ENCODE measurements at regions of chr17 and their contacts with region 1.

Region 1: DNA sequence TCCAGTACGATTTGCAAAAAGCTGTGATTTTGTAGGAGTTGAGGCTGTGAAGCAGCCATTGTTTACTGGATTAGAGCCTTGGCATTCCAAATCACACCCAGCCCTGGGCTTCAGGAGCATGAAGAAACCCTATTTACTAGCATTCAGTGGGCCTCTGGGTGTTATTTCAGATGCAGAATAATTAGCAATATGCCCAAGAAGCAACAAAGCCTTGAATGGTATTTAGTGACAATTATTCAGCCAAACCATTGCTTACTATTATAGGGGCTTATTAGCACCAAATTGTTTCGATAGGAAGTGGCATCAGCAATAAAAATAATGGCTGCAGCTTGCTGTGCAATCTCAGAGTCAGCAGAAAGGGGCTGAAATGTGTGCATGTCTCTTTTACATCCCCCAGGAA is 166.6 kb upstream of the SHISA6 start:
- DNase-seq: no peak
- H3K4me3 ChIP-seq: no peak overlapping the region
- H3K27ac ChIP-seq: no peak overlapping the region
- H3K4me1 ChIP-seq: no peaks in the 10 kb centered on the region
- H3K27me3 ChIP-seq: no peaks in the 10 kb centered on the region
- CTCF ChIP-seq: no peak
- EP300 ChIP-seq: no peak
- POLR2A ChIP-seq: no peak

Region 2: DNA sequence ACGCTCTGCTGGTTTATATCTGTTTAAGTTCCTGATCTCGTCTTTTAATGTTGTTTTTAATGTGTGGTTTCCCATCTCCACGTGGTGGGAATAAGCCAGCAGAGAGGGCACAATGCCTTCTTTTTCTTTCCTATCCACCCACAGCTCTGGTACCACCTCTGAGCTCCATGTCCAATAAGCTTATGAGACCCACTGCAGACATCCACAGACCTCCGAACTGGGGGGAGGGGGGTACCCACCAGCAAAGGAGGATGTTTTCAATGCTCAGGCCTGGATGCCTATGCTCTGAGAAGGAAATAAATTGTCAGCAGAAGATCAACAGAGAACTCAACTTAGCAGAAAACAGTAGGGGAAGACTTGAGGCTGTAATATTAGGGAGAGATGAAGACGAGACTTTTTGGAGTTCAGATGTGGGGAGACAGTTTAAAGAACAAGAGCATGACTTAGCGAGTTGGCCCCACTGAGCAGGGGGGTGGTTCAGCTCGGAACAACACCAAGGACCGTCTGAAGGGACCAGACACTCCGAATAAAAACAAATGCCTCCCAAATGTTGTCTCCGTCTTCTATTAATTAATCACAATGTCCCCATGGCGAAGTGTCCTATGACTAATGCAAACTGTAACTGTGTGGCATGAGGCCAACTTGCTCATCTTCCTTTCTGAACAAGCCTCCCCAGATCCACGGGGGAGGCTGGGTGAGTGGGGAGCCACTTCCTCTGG is 938.8 kb before region 1 on chr17:
- in situ Hi-C with region 1: no loop called
- intact Hi-C with region 1: no loop called
- DNase-seq: peak; percentile 49
- H3K4me3 ChIP-seq: no peak overlapping the region
- H3K27ac ChIP-seq: peak overlapping the region; percentile 36 to 65 (median 49)
- H3K4me1 ChIP-seq: peaks cover 0 to 15% (median 0%) of the 10 kb centered on the region in 4 donors
- H3K27me3 ChIP-seq: no peaks in the 10 kb centered on the region
- CTCF ChIP-seq: no peak
- EP300 ChIP-seq: no peak
- POLR2A ChIP-seq: no peak

Region 3: DNA sequence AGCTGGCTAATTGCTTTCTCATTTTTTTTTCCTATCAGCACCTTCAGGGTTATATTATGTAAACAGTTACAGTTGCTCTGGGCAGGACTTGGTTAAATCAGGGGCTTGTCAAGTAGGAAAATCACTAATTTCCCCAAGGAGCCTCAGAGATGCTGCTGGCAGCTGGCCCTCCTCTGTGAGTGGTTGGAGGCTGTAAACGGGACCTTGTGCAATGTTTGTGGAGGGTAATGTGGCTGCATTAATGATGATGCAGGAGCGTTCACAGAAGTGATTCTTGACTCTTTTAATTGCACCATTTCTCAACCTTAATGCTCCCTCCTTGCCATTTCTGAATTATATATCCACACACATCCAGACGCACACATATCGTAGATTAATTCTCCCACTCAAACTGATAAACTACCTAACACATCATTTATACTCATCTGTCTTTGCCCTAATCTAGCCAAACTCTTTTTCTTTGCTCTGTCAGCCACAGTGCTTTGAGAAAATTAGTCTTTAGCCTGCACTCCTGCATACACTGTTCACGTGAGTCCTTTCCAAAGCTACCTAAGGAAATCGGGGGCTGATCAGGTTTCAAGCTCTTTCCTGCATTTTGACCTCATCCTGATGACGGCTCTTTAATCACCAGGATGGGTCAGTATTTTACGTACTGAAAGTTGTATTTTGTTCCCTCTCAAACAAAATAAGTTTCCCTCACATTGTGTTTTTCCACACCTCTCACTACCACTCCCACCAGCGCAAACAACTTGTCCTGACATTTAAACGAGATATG is 82.2 kb before region 1 on chr17:
- in situ Hi-C with region 1: no loop called
- intact Hi-C with region 1: loop called (anchors 10 kb)
- DNase-seq: no peak
- H3K4me3 ChIP-seq: no peak overlapping the region
- H3K27ac ChIP-seq: no peak overlapping the region
- H3K4me1 ChIP-seq: no peaks in the 10 kb centered on the region
- H3K27me3 ChIP-seq: no peaks in the 10 kb centered on the region
- CTCF ChIP-seq: no peak
- EP300 ChIP-seq: no peak
- POLR2A ChIP-seq: no peak

Measured in transverse colon (tissue), 4 donors.